ENCODE measurements at regions of chr18 and their contacts with region 1.

Region 1: DNA sequence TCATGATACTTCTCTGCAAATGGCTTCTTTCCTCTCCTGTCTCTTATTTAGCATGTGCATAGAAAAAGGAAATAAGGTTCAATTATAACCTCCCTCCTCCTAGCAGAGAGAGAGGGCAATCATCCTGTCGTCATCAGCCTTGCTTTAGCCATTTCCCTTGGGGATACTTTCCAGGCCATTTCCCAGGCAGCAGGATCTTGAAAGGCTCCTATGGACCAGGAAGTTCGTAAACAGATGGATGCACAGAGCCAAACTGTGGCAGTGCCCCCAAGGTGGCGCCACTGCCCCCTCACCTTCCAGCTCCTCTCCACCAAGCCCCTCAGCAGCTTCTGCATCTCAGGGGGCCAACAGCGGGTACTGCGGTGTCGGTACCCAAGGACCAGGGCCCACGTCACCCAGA is 157.4 kb downstream of the DTNA start:
- DNase-seq: no peak
- H3K4me3 Mint-ChIP-seq: no peak overlapping the region
- H3K27ac Mint-ChIP-seq: no peak overlapping the region
- H3K4me1 Mint-ChIP-seq: no peaks in the 10 kb centered on the region
- H3K27me3 Mint-ChIP-seq: no peaks in the 10 kb centered on the region
- CTCF ChIP-seq: peak; percentile 7

Region 2: GRCh38 chr18:34880882-34881834 is 13.6 kb after region 1 on chr18:
- CTCF ChIA-PET with region 1: interaction called, 11 read pairs
- POLR2A ChIA-PET with region 1: no interaction called
- intact Hi-C with region 1: no loop called
- DNase-seq: peak; percentile 18
- H3K4me3 Mint-ChIP-seq: no peak overlapping the region
- H3K27ac Mint-ChIP-seq: no peak overlapping the region
- H3K4me1 Mint-ChIP-seq: no peaks in the 10 kb centered on the region
- H3K27me3 Mint-ChIP-seq: peaks cover 4% of the 10 kb centered on the region
- CTCF ChIP-seq: peak; percentile 17

Region 3: GRCh38 chr18:34976899-34977837 is 109.6 kb after region 1 on chr18:
- CTCF ChIA-PET with region 1: interaction called, 4 read pairs
- POLR2A ChIA-PET with region 1: no interaction called
- intact Hi-C with region 1: loop called (anchors 10 kb)
- DNase-seq: no peak
- H3K4me3 Mint-ChIP-seq: peak overlapping the region; percentile 75
- H3K27ac Mint-ChIP-seq: no peak overlapping the region
- H3K4me1 Mint-ChIP-seq: peaks cover 23% of the 10 kb centered on the region
- H3K27me3 Mint-ChIP-seq: peaks cover 47% of the 10 kb centered on the region
- CTCF ChIP-seq: no peak

Region 4: DNA sequence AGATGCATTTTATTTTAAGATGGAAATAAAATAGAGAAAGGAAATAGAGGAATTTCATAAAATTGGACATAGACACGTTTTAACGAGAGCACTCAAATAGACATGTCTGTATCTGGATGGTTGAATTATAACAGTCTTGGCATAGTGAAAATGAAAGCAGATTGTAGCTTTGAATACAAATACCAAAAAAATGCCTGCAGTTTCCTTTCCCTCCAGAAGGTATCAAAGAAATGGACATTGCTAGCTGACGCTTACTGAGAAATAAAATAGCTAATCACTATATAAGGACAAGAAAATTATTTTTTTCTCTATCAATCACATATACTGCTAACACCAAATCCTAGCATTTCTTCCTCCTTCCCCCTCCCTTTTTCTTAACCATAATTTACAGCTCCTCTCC is 162.2 kb after region 1 on chr18:
- CTCF ChIA-PET with region 1: no interaction called
- POLR2A ChIA-PET with region 1: no interaction called
- intact Hi-C with region 1: no loop called
- DNase-seq: no peak
- H3K4me3 Mint-ChIP-seq: no peak overlapping the region
- H3K27ac Mint-ChIP-seq: peak overlapping the region; percentile 20
- H3K4me1 Mint-ChIP-seq: peaks cover 6% of the 10 kb centered on the region
- H3K27me3 Mint-ChIP-seq: no peaks in the 10 kb centered on the region
- CTCF ChIP-seq: no peak

Region 5: GRCh38 chr18:35185771-35186170 is 318.3 kb after region 1 on chr18:
- CTCF ChIA-PET with region 1: interaction called, 11 read pairs
- POLR2A ChIA-PET with region 1: no interaction called
- intact Hi-C with region 1: no loop called
- DNase-seq: peak; percentile 8
- H3K4me3 Mint-ChIP-seq: no peak overlapping the region
- H3K27ac Mint-ChIP-seq: no peak overlapping the region
- H3K4me1 Mint-ChIP-seq: peaks cover 5% of the 10 kb centered on the region
- H3K27me3 Mint-ChIP-seq: no peaks in the 10 kb centered on the region
- CTCF ChIP-seq: no peak

Region 6: DNA sequence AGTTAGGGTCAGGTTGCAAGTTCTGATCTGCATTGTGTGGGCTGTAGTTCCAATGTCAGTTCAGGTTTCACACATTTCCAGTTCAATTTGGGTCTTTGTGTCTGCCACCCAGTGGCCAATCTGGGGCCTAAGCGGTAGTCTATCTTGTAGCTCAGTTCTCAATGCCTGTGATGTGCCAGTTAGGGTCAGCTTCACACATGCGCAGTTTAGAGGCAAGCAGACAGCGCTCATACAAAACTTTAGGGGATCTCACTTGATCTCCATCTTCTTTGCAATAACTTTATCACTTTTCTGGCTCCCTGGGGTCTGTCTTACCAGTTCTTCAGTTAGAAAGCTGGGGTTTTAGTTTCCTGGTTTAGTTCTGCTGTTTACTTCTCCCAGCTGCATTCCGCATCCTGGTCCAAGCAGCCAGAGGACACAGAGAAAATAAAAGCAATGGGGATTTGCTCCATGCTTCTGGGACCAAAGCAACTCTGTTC is 487.7 kb after region 1 on chr18:
- CTCF ChIA-PET with region 1: no interaction called
- POLR2A ChIA-PET with region 1: no interaction called
- intact Hi-C with region 1: loop called (anchors 5 kb)
- DNase-seq: peak; percentile 72
- H3K4me3 Mint-ChIP-seq: no peak overlapping the region
- H3K27ac Mint-ChIP-seq: no peak overlapping the region
- H3K4me1 Mint-ChIP-seq: no peaks in the 10 kb centered on the region
- H3K27me3 Mint-ChIP-seq: no peaks in the 10 kb centered on the region
- CTCF ChIP-seq: peak; percentile 50

Measured in MCF 10A (cell line).